Pancreas (tissue), 10 donors: ENCODE measurements at regions of chr14 and their contacts with region 1.

Region 1: DNA sequence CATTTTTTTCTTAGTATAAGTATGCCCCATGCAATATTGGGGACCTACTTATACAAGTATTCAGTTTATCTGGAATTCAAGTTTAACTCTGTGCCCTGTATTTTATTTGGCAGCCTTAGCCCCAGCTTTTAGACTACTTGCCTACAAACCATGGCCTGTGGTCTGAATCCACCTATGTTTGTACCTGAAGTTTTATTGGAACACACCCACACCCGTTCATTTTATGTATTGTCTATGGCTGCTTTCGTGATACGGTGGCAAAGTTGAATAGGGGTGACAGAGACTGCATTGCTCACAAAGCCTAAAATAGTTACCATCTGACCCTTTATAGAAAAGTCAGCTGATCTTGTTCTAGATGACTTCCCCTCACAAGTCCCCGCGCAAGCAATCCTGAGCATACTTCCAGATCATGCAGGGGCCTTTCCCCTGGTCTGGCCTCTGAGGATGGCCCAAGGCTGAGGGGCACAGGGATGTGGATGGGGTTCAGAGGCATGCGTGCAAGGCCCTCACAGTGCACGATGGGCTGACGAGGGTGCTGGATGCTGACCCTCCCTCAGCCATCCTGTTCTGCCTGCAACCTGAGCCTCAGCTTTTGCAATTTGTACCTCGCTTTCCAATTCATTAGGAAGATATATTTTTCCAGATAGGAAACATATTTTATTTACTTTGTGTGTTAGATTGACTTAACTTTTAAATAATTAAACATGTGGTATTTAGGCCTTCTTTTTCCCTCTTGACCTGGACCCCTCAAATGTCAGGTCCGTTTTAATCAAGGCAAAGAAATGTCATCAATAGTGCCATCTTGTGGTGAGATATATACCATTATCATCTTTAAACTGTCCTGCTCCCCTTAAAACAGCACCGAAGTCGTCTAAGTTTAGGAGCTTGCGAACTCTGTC is 527.3 kb upstream of the CCDC196 start:
- DNase-seq: no peak
- ATAC-seq: peak in 3 of 4 donors; percentile 61 to 80 (median 62)
- H3K4me3 ChIP-seq: no peak overlapping the region
- H3K27ac ChIP-seq: no peak overlapping the region
- H3K4me1 ChIP-seq: no peaks in the 10 kb centered on the region
- H3K27me3 ChIP-seq: no peaks in the 10 kb centered on the region
- CTCF ChIP-seq: peak in 3 of 4 donors; percentile 9 to 43 (median 32)

Region 2: GRCh38 chr14:65156568-65157366 is 802.1 kb before region 1 on chr14:
- intact Hi-C with region 1: loop called in 1 of 3 experiments (anchors 5 kb)
- DNase-seq: no peak
- ATAC-seq: peak in 3 of 4 donors; percentile 29 to 83 (median 59)
- H3K4me3 ChIP-seq: no peak overlapping the region
- H3K27ac ChIP-seq: peak overlapping the region in 1 of 4 donors; percentile 33
- H3K4me1 ChIP-seq: no peaks in the 10 kb centered on the region
- H3K27me3 ChIP-seq: no peaks in the 10 kb centered on the region
- CTCF ChIP-seq: no peak

Region 3: DNA sequence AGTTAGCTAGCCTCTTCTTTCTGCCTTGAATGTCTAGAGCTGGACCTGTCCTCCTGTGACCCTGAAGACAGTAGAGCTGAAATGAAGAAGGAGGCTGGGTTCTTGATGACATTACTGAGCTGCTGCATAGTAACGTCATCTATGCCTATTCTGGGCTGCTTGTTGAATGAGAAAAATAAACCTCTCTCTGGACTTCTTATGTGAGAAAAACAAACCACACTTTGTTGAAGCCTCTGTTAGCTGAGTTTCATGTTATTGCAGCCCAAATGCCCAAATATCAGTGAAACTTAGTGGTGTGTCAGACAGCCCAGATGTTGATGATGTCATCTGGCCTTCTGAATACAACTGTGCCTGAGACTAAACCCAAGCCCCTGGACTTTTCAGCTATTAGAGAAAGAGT is 789.6 kb before region 1 on chr14:
- intact Hi-C with region 1: loop called in 1 of 3 experiments (anchors 5 kb)
- DNase-seq: no peak
- ATAC-seq: no peak
- H3K4me3 ChIP-seq: no peak overlapping the region
- H3K27ac ChIP-seq: no peak overlapping the region
- H3K4me1 ChIP-seq: no peaks in the 10 kb centered on the region
- H3K27me3 ChIP-seq: peaks cover 0 to 3% (median 0%) of the 10 kb centered on the region in 4 donors
- CTCF ChIP-seq: no peak

Region 4: DNA sequence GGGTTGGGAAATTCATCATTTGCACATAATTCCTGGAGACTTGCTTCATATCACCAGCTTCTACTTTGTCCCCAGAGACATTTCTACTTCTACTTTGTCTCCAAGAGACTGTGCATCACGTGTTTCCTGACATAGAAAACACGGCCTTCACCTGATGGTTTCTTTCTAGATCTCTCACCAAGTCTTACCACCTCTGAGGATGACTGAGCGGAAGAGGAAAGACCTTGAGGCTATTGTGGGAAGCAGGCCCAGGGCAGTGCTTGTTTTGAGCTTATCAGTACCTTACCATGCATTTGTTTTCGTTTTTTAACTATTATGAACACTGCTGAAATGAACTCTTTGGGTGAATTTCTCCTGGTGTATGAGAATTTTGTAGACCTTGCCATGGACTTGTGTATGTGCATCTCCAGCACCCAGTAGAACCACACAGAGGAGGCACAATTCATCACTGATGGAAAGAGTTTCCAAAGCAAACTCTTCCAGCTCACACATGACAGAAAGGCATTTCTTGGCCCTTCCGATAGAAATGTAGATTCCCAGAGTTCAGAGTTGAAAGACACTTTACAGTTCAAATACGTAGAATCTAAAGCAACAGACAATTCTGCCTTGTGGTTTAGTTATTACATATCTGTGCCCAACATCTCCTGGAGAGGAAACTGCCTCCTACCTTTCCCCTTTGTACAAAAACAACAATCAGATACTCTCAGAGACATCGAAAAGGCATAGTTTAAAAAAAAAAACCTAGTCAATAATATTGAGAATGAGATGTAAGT is 111.7 kb before region 1 on chr14:
- intact Hi-C with region 1: no loop called
- DNase-seq: peak in 2 of 6 donors; percentile 15 to 28
- ATAC-seq: peak; percentile 46 to 90 (median 72)
- H3K4me3 ChIP-seq: no peak overlapping the region
- H3K27ac ChIP-seq: no peak overlapping the region
- H3K4me1 ChIP-seq: no peaks in the 10 kb centered on the region
- H3K27me3 ChIP-seq: no peaks in the 10 kb centered on the region
- CTCF ChIP-seq: no peak

Region 5: GRCh38 chr14:66056926-66057552 is 98.1 kb after region 1 on chr14:
- intact Hi-C with region 1: no loop called
- DNase-seq: no peak
- ATAC-seq: no peak
- H3K4me3 ChIP-seq: no peak overlapping the region
- H3K27ac ChIP-seq: no peak overlapping the region
- H3K4me1 ChIP-seq: no peaks in the 10 kb centered on the region
- H3K27me3 ChIP-seq: no peaks in the 10 kb centered on the region
- CTCF ChIP-seq: no peak